ENCODE measurements at regions of chr3 and their contacts with region 1.

Region 1: DNA sequence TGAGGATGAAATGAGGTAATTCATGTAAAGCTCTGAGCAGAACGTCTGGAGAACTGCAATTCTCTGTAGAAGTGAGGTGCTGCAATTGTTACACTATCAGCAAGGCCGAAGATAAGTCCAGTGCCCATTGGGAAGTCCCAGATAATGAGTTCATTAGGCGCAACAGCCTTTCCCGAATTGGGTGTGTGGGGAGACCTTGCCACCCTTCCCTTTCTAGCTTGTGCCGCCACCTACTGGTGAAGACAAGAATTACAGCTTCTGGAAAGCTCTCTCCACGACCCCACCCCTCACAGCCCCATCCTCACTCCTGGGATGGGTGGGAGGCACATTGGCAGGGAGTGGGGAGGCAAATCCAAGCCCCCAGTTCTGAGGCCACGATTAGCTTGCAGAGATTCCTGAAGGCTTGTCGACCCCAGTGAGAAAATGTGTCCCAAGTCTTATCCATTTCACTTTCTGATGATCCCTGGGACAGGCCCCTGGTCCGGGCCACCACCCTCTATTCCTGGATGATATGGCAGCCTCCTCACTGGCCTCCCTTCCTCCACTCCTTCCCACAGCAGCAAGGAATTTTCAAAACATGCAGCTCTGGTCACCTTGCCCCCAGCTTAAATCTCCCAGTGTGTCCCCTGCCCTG is 36.4 kb downstream of the FAM3D start:
- DNase-seq: peak; percentile 64 to 82 (median 70)
- H3K4me3 ChIP-seq: no peak overlapping the region
- H3K27ac ChIP-seq: no peak overlapping the region
- H3K4me1 ChIP-seq: peaks cover 20% of the 10 kb centered on the region
- H3K27me3 ChIP-seq: no peaks in the 10 kb centered on the region
- CTCF ChIP-seq: peak; percentile 65 to 93 (median 92)
- EP300 ChIP-seq: no peak
- POLR2A ChIP-seq: no peak

Region 2: DNA sequence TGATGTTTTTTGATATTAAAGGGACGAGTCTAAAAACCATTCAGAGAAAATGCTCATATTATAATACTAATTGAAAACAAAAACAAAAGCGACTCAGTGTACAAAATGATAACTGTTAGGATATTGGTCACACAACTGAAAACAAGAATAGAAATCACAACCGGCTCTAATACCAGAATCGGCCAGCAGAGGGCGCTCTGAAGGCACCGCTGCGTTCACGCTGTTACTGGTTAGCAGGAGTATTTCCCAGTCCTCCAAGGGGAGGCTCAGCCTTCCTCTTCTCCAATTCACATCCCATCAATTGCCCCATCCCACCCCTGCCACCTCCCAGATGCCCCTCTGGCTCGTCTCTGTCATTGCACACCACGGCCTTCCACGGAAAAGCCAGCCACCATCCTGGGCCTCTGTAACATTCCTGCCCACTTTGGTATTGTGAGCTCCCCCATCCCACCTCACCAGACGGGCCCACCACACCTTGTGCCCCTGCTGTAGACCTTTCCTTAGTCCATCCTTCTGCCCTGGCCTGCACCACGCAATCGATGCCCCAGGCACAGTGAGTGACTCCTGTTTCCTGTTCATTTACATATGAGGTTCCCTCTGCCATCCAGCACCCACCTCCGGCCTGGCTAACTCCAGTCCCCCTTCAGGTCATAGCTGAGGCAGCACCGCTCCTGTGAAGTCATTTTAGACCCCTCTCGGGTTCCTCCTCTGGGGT is 61.5 kb before region 1 on chr3:
- intact Hi-C with region 1: loop called (anchors 2 to 5 kb)
- DNase-seq: peak; percentile 66 to 89 (median 82)
- H3K4me3 ChIP-seq: no peak overlapping the region
- H3K27ac ChIP-seq: no peak overlapping the region
- H3K4me1 ChIP-seq: no peaks in the 10 kb centered on the region
- H3K27me3 ChIP-seq: no peaks in the 10 kb centered on the region
- CTCF ChIP-seq: peak; percentile 78 to 93 (median 82)
- EP300 ChIP-seq: no peak
- POLR2A ChIP-seq: no peak

Region 3: GRCh38 chr3:58608648-58609047 is 21.5 kb before region 1 on chr3:
- intact Hi-C with region 1: no loop called
- DNase-seq: no peak
- H3K4me3 ChIP-seq: no peak overlapping the region
- H3K27ac ChIP-seq: no peak overlapping the region
- H3K4me1 ChIP-seq: no peaks in the 10 kb centered on the region
- H3K27me3 ChIP-seq: no peaks in the 10 kb centered on the region
- CTCF ChIP-seq: no peak
- EP300 ChIP-seq: no peak
- POLR2A ChIP-seq: no peak